Activated CD4-positive, alpha-beta memory T cell treated with anti-CD3 and anti-CD28 coated beads for 36 hours (primary cell): ENCODE measurements at regions of chrX and their contacts with region 1.

Region 1: DNA sequence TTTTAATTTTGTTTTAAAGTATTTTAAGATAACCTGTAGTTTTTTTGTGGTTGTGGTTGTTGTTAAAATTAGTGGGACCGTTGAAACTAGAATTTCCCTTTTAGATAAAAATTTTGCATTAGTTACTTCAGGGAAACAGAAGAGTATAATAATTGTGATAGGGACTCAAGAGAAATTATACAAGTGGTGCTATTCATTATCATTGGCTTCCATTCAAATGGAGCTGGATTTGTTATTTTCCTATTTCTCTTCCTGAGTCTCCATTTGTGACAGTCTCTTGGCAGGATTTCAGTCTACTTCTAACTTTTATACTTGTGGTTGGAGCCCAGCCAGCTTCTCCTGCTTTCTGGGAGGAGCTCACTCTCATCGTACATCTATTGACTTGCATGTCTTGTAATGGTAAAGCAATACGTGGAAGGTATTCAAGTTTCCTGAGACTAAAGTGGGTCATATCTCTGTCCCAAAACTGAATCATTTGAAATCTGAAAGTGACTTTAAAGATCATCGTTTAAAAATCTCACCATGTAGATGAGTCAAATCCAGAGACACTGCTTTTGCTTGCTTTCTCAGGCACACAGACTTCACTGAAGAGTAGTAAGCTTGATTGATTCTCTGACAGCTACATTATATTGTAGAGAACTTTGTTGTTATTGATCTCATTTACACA is 155.8 kb downstream of the RPA4 start:
- DNase-seq: peak; percentile 15
- H3K4me3 Mint-ChIP-seq: no peak overlapping the region
- H3K27ac Mint-ChIP-seq: peak overlapping the region; percentile 51
- H3K4me1 Mint-ChIP-seq: peaks cover 11% of the 10 kb centered on the region
- H3K27me3 Mint-ChIP-seq: no peaks in the 10 kb centered on the region

Region 2: DNA sequence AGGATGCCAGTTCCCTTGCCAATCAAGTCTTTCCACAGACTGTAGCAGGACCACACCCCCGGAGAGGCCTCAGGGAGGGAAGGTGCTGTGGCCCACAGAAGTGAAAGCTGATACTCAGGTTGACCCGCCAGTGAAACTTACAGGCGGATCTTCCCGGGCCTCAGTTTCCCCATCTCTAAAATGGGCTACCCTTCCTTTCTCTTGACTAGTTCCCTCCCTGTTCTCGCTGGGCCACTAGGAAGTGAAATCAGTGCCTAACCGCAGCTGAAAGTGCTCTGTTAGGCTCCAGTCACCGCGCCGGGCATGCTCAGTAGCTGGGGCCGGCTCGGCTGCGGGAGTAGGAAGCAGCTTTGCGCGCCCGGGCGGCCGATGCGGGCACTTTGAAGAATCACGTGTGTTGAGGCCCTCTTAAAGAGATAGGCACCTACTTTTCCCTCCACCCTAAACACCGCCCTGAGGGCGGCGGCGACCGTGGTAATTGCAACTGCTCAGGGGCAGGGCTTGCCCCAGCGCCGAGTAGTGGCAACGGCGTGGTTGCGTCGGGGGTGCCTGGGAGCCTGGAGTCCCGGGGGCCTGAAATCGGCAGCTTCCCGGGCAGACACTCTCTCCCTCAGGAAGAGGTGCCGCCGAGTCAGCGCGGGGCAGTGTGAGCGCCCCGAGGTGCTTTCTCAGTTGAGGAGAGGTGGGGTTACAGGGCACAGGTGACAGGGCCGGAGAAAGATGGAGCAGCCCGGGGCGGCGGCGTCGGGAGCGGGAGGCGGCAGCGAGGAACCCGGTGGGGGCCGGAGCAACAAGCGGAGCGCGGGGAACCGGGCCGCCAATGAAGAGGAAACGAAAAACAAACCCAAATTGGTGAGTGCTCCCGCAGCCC is 354.9 kb before region 1 on chrX and contains the start of gene DIAPH2:
- CTCF ChIA-PET with region 1: no interaction called
- POLR2A ChIA-PET with region 1: no interaction called
- intact Hi-C with region 1: loop called (anchors 10 kb)
- DNase-seq: peak; percentile 85
- H3K4me3 Mint-ChIP-seq: peak within 1 kb of the TSS; percentile 90
- H3K27ac Mint-ChIP-seq: peak within 1 kb of the TSS; percentile 93
- H3K4me1 Mint-ChIP-seq: peaks cover 24% of the 10 kb centered on the region
- H3K27me3 Mint-ChIP-seq: no peaks in the 10 kb centered on the region
- total RNA-seq, gene DIAPH2: 10.0 to 10.6 TPM

Region 3: DNA sequence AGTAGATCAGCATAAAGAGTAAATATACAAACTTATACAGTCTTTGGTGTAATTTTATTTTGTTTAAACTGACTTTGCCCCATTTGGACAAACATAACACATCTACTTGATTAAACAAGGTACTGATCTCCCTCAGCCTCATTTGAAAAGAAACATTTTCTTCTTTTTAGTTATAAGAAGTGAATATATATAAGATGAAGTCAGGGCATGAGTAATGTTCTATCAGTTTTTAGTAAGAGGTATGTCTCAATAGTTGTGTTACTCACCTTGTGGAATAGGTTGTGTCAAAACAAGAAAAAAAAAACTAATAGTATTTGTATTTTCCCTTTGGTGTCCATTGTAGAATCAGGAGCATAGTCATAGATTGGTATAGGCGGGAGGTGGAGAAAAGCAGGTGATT is 171.6 kb after region 1 on chrX:
- CTCF ChIA-PET with region 1: no interaction called
- POLR2A ChIA-PET with region 1: no interaction called
- intact Hi-C with region 1: loop called (anchors 2 kb)
- DNase-seq: no peak
- H3K4me3 Mint-ChIP-seq: no peak overlapping the region
- H3K27ac Mint-ChIP-seq: peak overlapping the region; percentile 28
- H3K4me1 Mint-ChIP-seq: peaks cover 10% of the 10 kb centered on the region
- H3K27me3 Mint-ChIP-seq: no peaks in the 10 kb centered on the region